GM12878 (cell line): ENCODE measurements at regions of chr4 and their contacts with region 1.

Region 1: GRCh38 chr4:119570401-119570800 is 58.2 kb downstream of the PDE5A start:
- DNase-seq: no peak
- ATAC-seq: no peak
- H3K4me3 ChIP-seq: no peak overlapping the region
- H3K27ac ChIP-seq: no peak overlapping the region
- H3K4me1 ChIP-seq: no peaks in the 10 kb centered on the region
- H3K27me3 ChIP-seq: no peaks in the 10 kb centered on the region
- CTCF ChIP-seq: no peak
- EP300 ChIP-seq: no peak
- POLR2A ChIP-seq: no peak
- RAD21 ChIP-seq: no peak

Region 2: GRCh38 chr4:119597377-119597776 is 27.0 kb after region 1 on chr4:
- CTCF ChIA-PET with region 1: no interaction called
- POLR2A ChIA-PET with region 1: no interaction called
- RAD21 ChIA-PET with region 1: no interaction called
- SMC1A ChIA-PET with region 1: no interaction called
- in situ Hi-C with region 1: no loop called
- intact Hi-C with region 1: no loop called
- DNase-seq: no peak
- ATAC-seq: no peak
- H3K4me3 ChIP-seq: no peak overlapping the region
- H3K27ac ChIP-seq: no peak overlapping the region
- H3K4me1 ChIP-seq: no peaks in the 10 kb centered on the region
- H3K27me3 ChIP-seq: no peaks in the 10 kb centered on the region
- CTCF ChIP-seq: no peak
- EP300 ChIP-seq: no peak
- POLR2A ChIP-seq: no peak
- RAD21 ChIP-seq: no peak

Region 3: GRCh38 chr4:120760047-120760446 is 1189.6 kb after region 1 on chr4:
- CTCF ChIA-PET with region 1: no interaction called
- POLR2A ChIA-PET with region 1: no interaction called
- RAD21 ChIA-PET with region 1: no interaction called
- SMC1A ChIA-PET with region 1: no interaction called
- in situ Hi-C with region 1: no loop called
- intact Hi-C with region 1: loop called (anchors 5 kb)
- DNase-seq: no peak
- ATAC-seq: no peak
- H3K4me3 ChIP-seq: no peak overlapping the region
- H3K27ac ChIP-seq: no peak overlapping the region
- H3K4me1 ChIP-seq: no peaks in the 10 kb centered on the region
- H3K27me3 ChIP-seq: no peaks in the 10 kb centered on the region
- CTCF ChIP-seq: no peak
- EP300 ChIP-seq: no peak
- POLR2A ChIP-seq: no peak
- RAD21 ChIP-seq: no peak